PC-9 (cell line): ENCODE measurements at regions of chr20 and their contacts with region 1.

Region 1: GRCh38 chr20:58611631-58612048 is 39.4 kb upstream of the STX16 start:
- DNase-seq: peak; percentile 7 to 45
- H3K4me3 ChIP-seq: no peak overlapping the region
- H3K27ac ChIP-seq: peak overlapping the region; percentile 46
- H3K4me1 ChIP-seq: peaks cover 34% of the 10 kb centered on the region
- H3K27me3 ChIP-seq: no peaks in the 10 kb centered on the region
- CTCF ChIP-seq: no peak

Region 2: GRCh38 chr20:58623826-58624473 is 12.3 kb after region 1 on chr20:
- CTCF ChIA-PET with region 1: no interaction called
- POLR2A ChIA-PET with region 1: no interaction called
- intact Hi-C with region 1: loop called (anchors 1 kb)
- DNase-seq: peak; percentile 90 to 91
- H3K4me3 ChIP-seq: peak overlapping the region; percentile 11; the same call in 1 of the 2 replicates
- H3K27ac ChIP-seq: peak overlapping the region; percentile 83
- H3K4me1 ChIP-seq: peaks cover 39% of the 10 kb centered on the region
- H3K27me3 ChIP-seq: no peaks in the 10 kb centered on the region
- CTCF ChIP-seq: no peak

Region 3: GRCh38 chr20:58645412-58645968 is 33.9 kb after region 1 on chr20:
- CTCF ChIA-PET with region 1: no interaction called
- POLR2A ChIA-PET with region 1: no interaction called
- intact Hi-C with region 1: loop called (anchors 1 kb)
- DNase-seq: peak; percentile 38 to 91
- H3K4me3 ChIP-seq: no peak overlapping the region
- H3K27ac ChIP-seq: peak overlapping the region; percentile 43
- H3K4me1 ChIP-seq: peaks cover 26% of the 10 kb centered on the region
- H3K27me3 ChIP-seq: no peaks in the 10 kb centered on the region
- CTCF ChIP-seq: no peak

Region 4: GRCh38 chr20:58906894-58907398 is 295.3 kb after region 1 on chr20:
- CTCF ChIA-PET with region 1: no interaction called
- POLR2A ChIA-PET with region 1: no interaction called
- intact Hi-C with region 1: no loop called
- DNase-seq: peak in 1 of 2 experiments; percentile 95
- H3K4me3 ChIP-seq: peak overlapping the region; percentile 17; the same call in 1 of the 2 replicates
- H3K27ac ChIP-seq: peak overlapping the region; percentile 69
- H3K4me1 ChIP-seq: peaks cover 30% of the 10 kb centered on the region
- H3K27me3 ChIP-seq: no peaks in the 10 kb centered on the region
- CTCF ChIP-seq: no peak